HCT116 (cell line): ENCODE measurements at regions of chr15 and their contacts with region 1.

Region 1: GRCh38 chr15:38563723-38564519 is 693 bp downstream of the RASGRP1 start:
- DNase-seq: peak; percentile 8
- ATAC-seq: peak; percentile 92
- H3K4me3 ChIP-seq: peak overlapping the region; percentile 41 to 53
- H3K27ac ChIP-seq: no peak overlapping the region; the same call in 1 of the 2 replicates
- H3K4me1 ChIP-seq: peaks cover 2 to 12% of the 10 kb centered on the region in 2 experiments; a peak in 1 of 4 replicates
- H3K27me3 ChIP-seq: 0 out of 2 replicates have a peak, but pooled peaks cover 4% of the 10 kb centered on the region
- CTCF ChIP-seq: peak; percentile 55 to 94 (median 83)
- POLR2A ChIP-seq: no peak
- RAD21 ChIP-seq: peak; percentile 37; the same call in 1 of the 2 replicates

Region 2: GRCh38 chr15:38308797-38309196 is 255.1 kb before region 1 on chr15:
- CTCF ChIA-PET with region 1: no interaction called
- POLR2A ChIA-PET with region 1: no interaction called
- RAD21 ChIA-PET with region 1: no interaction called
- intact Hi-C with region 1: no loop called
- DNase-seq: no peak
- ATAC-seq: no peak
- H3K4me3 ChIP-seq: no peak overlapping the region
- H3K27ac ChIP-seq: no peak overlapping the region
- H3K4me1 ChIP-seq: no peaks in the 10 kb centered on the region
- H3K27me3 ChIP-seq: no peaks in the 10 kb centered on the region
- CTCF ChIP-seq: no peak
- POLR2A ChIP-seq: no peak
- RAD21 ChIP-seq: no peak

Region 3: DNA sequence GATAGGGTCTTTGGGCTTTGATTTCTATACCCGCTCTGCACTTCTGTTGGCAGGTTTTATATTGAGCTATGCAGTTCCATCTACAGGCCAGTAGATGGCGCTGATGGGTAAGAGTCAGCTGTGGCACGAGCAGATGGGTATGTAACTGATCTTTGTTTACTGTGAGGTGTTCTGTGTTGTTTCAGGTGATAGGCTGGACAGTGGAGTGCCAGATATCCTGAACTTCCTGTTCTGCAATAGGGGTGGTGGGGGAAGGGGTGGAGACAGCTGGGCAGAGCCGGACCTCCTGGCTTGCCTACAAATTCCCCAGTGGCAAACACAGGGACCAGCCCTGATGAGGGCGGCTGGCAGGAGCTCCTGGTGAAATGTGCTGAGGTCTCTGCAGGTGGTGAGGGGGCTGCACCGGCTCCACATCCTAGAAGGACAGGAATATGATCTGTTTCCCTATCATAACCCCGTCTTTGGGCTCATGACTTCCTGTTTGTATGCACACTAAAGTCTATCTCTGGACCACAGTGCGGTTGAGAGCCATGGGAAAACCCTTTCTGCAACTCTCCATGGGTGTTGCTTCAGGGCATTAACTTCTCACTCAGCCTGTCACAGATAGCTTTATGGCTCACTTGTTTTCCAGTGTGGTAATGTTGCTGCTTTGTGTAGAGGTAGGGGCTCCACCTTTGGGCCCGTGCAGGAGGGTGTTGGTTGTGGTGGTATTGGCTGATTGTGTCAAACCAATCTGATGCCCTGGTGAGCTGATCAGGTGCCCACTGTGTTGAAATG is 123.4 kb before region 1 on chr15:
- CTCF ChIA-PET with region 1: interaction called, 12 read pairs
- POLR2A ChIA-PET with region 1: no interaction called
- RAD21 ChIA-PET with region 1: interaction called in 1 of 2 experiments, 4 read pairs
- intact Hi-C with region 1: no loop called
- DNase-seq: peak; percentile 47
- ATAC-seq: peak; percentile 91
- H3K4me3 ChIP-seq: no peak overlapping the region
- H3K27ac ChIP-seq: no peak overlapping the region
- H3K4me1 ChIP-seq: peaks cover 0 to 5% of the 10 kb centered on the region in 2 experiments; a peak in 1 of 4 replicates
- H3K27me3 ChIP-seq: no peaks in the 10 kb centered on the region
- CTCF ChIP-seq: peak; percentile 48 to 97 (median 94); a peak in 5 of 6 replicates
- POLR2A ChIP-seq: no peak
- RAD21 ChIP-seq: peak; percentile 72

Region 4: GRCh38 chr15:38576837-38577236 is 12.9 kb after region 1 on chr15:
- CTCF ChIA-PET with region 1: interaction called, 16 read pairs
- POLR2A ChIA-PET with region 1: no interaction called
- RAD21 ChIA-PET with region 1: no interaction called
- intact Hi-C with region 1: no loop called
- DNase-seq: no peak
- ATAC-seq: no peak
- H3K4me3 ChIP-seq: no peak overlapping the region
- H3K27ac ChIP-seq: no peak overlapping the region
- H3K4me1 ChIP-seq: no peaks in the 10 kb centered on the region
- H3K27me3 ChIP-seq: peaks cover 5% of the 10 kb centered on the region
- CTCF ChIP-seq: no peak
- POLR2A ChIP-seq: no peak
- RAD21 ChIP-seq: no peak

Region 5: GRCh38 chr15:38683382-38684242 is 119.7 kb after region 1 on chr15:
- CTCF ChIA-PET with region 1: interaction called, 19 read pairs
- POLR2A ChIA-PET with region 1: no interaction called
- RAD21 ChIA-PET with region 1: interaction called in 1 of 2 experiments, 4 read pairs
- intact Hi-C with region 1: loop called (anchors 1 kb)
- DNase-seq: peak; percentile 27
- ATAC-seq: peak; percentile 95
- H3K4me3 ChIP-seq: no peak overlapping the region
- H3K27ac ChIP-seq: no peak overlapping the region
- H3K4me1 ChIP-seq: peaks cover 0 to 3% of the 10 kb centered on the region in 2 experiments; a peak in 1 of 4 replicates
- H3K27me3 ChIP-seq: no peaks in the 10 kb centered on the region
- CTCF ChIP-seq: peak; percentile 53 to 77 (median 69); a peak in 5 of 6 replicates
- POLR2A ChIP-seq: no peak
- RAD21 ChIP-seq: peak; percentile 68